Posterior vena cava (tissue), 2 donors: ENCODE measurements at regions of chr18 and their contacts with region 1.

Region 1: GRCh38 chr18:12531749-12532148 is 124.0 kb downstream of the PRELID3A start:
- DNase-seq: no peak

Region 2: DNA sequence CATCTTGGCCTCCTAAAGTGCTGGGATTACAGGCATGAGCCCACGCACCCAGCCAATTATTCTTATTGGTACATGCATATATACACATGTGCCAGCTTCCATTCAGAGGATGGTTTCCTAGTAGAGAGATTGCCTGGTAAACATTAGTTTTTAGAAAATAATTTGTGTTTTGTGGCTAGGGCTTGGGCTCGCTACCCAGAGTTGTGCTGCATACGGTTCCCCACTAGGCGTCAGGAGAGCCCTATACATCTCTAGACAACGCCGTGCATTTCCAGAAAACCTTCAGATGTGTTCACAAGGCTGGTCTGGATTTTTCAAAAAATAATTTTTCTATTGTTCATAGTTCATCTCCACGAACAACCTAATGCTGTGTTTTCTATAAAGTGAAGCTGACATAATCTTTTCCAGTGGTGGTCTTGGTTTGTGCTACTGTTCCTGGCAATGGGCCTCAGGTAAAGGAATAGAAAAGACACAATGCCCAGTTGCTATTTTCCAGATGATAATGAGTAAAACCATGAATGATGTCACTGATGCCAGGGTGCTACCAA is 140.1 kb before region 1 on chr18:
- intact Hi-C with region 1: no loop called
- DNase-seq: no peak

Region 3: DNA sequence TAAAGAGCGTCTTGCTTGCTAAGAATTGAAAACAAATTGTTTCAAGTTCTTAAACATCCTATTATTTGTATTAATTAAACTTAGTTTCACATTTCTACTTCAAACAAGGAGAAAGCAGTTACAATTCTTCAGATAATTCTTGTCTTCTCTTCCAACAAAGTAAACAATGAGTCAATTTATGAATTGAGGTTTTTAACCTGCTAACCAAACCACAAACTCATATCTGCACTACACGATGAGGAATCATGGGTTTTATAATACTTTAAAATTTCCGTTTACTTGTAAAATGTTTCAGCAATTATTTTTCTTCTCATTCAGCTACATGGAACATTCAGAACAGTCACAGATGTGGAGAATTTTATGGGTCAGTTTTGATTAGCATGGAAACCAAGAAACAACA is 11.9 kb after region 1 on chr18:
- intact Hi-C with region 1: loop called in 1 of 2 experiments (anchors 2 kb)
- DNase-seq: no peak